Motor neuron (in vitro differentiated cells): ENCODE measurements at regions of chr17 and their contacts with region 1.

Region 1: GRCh38 chr17:35119368-35120165 is at the start of gene RAD51D:
- ATAC-seq: peak; percentile 84 to 94 (median 92)
- H3K4me3 ChIP-seq: peak within 1 kb of the TSS; percentile 35 to 78 (median 54)
- H3K27ac ChIP-seq: peak within 1 kb of the TSS; percentile 1 to 68
- H3K4me1 ChIP-seq: peaks cover 10 to 12% of the 10 kb centered on the region in 2 donors
- total RNA-seq, gene RAD51D: 6.5 to 16.7 (median 8.3) TPM

Region 2: DNA sequence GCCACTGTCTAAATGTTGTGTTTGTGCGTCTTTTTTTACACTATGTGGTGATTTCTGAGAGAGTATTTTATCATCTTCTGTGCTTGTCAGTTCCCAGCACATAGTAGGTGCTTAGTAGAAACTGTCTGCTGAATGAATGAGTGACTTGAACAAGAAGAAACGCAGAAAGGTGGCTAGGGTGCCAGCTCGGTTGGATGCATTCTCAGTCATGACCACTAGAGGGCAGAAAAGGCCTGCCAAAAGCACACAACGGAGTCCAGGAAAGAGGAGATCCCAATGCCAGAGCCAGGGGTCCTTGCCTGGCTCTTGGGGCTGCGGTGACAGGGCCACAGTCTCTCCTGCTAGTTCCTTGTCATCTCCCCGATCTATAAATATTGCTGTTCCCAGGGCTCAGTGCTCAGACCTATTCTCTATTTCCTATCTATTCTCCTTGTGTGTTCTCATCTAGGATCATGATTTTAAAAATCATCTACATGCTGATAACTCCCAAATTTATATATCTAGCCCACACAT is 699.3 kb before region 1 on chr17:
- in situ Hi-C with region 1: loop called in 7 of 9 experiments (anchors 10 to 25 kb)
- ATAC-seq: peak; percentile 59 to 81 (median 74)
- H3K4me3 ChIP-seq: no peak overlapping the region
- H3K27ac ChIP-seq: no peak overlapping the region
- H3K4me1 ChIP-seq: peaks cover 0 to 8% of the 10 kb centered on the region in 2 donors

Region 3: GRCh38 chr17:34443619-34444469 is 675.7 kb before region 1 on chr17:
- in situ Hi-C with region 1: loop called in 2 of 9 experiments (anchors 25 kb)
- ATAC-seq: peak in 7 of 8 experiments; percentile 37 to 93 (median 91)
- H3K4me3 ChIP-seq: no peak overlapping the region
- H3K27ac ChIP-seq: no peak overlapping the region
- H3K4me1 ChIP-seq: peaks cover 0 to 35% of the 10 kb centered on the region in 2 donors

Region 4: DNA sequence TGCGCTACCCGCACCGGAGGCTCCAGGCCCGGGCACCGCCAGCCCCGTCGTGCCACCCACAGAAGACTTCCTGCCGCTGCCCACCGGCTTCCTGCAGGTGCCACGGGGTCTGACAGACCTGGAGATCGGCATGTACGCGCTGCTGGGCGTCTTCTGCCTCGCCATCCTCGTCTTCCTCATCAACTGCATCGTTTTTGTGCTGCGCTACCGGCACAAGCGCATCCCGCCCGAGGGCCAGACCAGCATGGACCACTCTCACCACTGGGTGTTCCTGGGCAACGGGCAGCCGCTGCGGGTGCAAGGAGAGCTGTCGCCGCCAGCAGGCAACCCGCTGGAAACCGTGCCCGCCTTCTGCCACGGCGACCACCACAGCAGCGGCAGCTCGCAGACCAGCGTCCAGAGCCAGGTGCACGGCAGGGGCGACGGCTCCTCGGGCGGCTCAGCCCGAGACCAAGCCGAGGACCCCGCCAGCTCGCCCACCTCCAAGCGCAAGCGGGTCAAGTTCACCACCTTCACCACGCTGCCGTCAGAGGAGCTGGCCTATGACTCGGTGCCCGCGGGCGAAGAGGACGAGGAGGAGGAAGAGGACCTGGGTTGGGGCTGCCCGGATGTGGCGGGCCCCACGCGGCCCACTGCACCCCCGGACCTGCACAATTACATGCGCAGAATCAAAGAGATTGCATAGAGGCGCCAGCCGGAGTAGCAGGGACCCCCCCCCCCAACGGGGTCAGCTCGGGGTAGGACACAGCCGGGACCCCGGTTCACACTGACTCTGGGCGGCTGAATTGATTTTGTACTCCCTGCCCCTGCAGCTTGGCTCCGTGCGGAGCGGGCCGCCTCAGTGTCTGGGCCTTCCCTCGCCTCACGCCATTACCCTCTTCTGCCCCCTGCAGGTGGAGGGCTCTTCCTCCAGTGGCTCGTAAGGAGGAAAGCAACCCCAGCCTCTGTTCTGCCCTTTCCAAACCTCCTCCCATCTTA is 481.7 kb before region 1 on chr17:
- in situ Hi-C with region 1: loop called in 1 of 9 experiments (anchors 25 kb)
- ATAC-seq: peak; percentile 88 to 100 (median 94)
- H3K4me3 ChIP-seq: no peak overlapping the region
- H3K27ac ChIP-seq: no peak overlapping the region
- H3K4me1 ChIP-seq: peaks cover 7 to 13% of the 10 kb centered on the region in 2 donors

Region 5: DNA sequence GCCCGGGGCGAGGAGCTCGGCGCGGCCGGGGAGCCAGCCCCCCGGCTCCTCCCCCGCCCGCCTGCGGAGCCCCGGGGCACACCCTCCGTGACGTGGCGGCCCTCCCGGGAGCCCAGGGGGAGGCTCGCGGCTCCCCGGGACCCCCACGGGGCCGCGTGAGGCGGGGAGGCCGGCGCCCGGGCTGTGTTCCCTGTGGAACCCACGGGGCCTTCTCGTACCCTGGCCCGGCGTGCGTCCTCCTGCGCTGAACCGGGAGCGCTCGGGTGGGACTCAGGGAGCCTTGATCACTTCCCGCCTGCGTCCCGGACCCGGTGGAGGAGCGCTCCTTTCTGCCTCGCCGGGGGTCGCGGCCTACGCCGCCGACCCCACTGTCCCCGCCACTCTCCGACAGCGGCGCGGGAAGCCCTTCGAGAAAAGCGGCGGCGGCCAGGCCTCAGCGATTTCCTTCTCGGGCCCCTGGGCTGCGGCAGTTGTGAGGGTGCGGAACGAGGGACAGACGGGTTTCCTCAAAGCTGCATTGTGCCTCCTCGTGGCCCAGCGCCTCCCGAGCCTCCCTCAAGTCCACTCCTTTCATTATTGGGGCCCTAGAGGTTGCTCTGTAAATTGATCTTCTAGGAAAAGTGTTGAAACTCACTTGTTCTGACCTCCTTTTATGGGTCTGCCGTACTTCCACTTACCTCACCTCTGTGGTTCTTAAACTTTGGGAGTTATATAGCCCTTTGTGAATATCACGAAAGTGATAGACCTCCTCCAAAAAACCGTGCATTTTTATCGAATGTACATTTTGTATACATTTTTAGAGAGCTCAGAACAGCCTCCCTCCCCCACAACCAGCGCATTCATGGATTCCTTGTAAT is 138.7 kb before region 1 on chr17:
- in situ Hi-C with region 1: loop called in 1 of 9 experiments (anchors 25 kb)
- ATAC-seq: peak; percentile 76 to 89 (median 84)
- H3K4me3 ChIP-seq: peak overlapping the region; percentile 77 to 96 (median 85)
- H3K27ac ChIP-seq: peak overlapping the region; percentile 97 to 98
- H3K4me1 ChIP-seq: peaks cover 9 to 11% of the 10 kb centered on the region in 2 donors

Region 6: GRCh38 chr17:34998205-34998604 is 121.4 kb before region 1 on chr17:
- in situ Hi-C with region 1: loop called in 4 of 9 experiments (anchors 10 to 25 kb)
- ATAC-seq: peak; percentile 54 to 90 (median 73)
- H3K4me3 ChIP-seq: no peak overlapping the region
- H3K27ac ChIP-seq: no peak overlapping the region
- H3K4me1 ChIP-seq: no peaks in the 10 kb centered on the region

Region 7: DNA sequence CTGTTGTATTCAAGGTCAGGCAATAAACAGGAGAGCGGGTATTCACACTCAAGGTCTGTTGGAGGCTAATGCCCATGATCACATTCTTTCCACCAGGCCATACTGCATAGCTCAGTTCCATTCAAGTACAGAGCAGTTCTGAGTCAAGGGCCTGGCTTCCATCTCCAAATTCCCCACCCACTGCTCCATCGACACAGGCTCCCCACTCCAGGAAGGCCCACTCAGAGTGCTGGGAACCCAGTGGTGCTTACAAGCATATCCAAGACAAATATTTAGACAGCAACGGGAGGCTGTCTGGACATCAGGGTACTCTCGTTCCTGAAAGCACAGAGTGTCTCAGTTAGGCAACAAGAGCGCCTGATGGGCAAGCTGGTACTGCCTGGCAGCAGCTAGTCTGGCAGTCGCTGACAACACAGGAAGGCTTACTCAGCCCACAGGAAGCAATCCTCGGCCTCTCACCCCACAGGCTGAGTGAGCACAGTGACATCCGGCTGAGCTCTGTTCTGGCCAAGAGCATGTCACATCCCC is 97.0 kb before region 1 on chr17:
- in situ Hi-C with region 1: loop called in 2 of 9 experiments (anchors 25 kb)
- ATAC-seq: peak in 4 of 8 experiments; percentile 50 to 95 (median 72)
- H3K4me3 ChIP-seq: no peak overlapping the region
- H3K27ac ChIP-seq: no peak overlapping the region
- H3K4me1 ChIP-seq: no peaks in the 10 kb centered on the region

Region 8: DNA sequence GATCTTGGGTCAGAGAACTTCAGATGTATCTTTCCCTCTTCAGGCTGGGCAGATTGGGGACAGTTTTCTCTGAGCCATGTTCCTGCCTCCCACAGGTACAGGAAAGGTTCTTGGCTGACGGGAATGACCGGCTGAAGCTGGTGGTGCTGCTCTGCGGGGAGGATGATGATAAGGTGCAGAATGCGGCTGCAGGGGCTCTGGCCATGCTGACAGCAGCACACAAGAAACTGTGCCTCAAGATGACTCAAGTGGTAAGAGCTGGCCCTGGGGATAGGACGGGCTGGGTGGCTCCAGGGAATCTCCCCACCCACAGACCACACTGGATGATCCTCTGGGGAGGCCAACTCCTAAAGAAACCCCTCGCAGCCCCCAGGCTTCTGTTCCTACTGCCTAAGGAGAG is 63.8 kb after region 1 on chr17:
- in situ Hi-C with region 1: no loop called
- ATAC-seq: peak in 1 of 8 experiments; percentile 62
- H3K4me3 ChIP-seq: no peak overlapping the region
- H3K27ac ChIP-seq: no peak overlapping the region
- H3K4me1 ChIP-seq: no peaks in the 10 kb centered on the region

Region 9: GRCh38 chr17:35286120-35286781 is 166.7 kb after region 1 on chr17:
- in situ Hi-C with region 1: no loop called
- ATAC-seq: peak in 3 of 8 experiments; percentile 28 to 82 (median 65)
- H3K4me3 ChIP-seq: no peak overlapping the region
- H3K27ac ChIP-seq: no peak overlapping the region
- H3K4me1 ChIP-seq: no peaks in the 10 kb centered on the region